ENCODE measurements at regions of chr13 and their contacts with region 1.

Region 1: GRCh38 chr13:113296842-113297369 is at the start of gene LAMP1:
- DNase-seq: peak; percentile 97 to 100 (median 99)
- ATAC-seq: peak; percentile 83
- H3K4me3 ChIP-seq: peak within 1 kb of the TSS; percentile 77
- H3K4me3 Mint-ChIP-seq: peak within 1 kb of the TSS; percentile 100
- H3K27ac ChIP-seq: peak within 1 kb of the TSS; percentile 83 to 88
- H3K27ac Mint-ChIP-seq: peak within 1 kb of the TSS; percentile 99
- H3K4me1 ChIP-seq: peaks cover 37% of the 10 kb centered on the region
- H3K4me1 Mint-ChIP-seq: peaks cover 36% of the 10 kb centered on the region
- H3K27me3 ChIP-seq: peaks cover 3 to 8% of the 10 kb centered on the region in 2 experiments
- H3K27me3 Mint-ChIP-seq: peaks cover 20% of the 10 kb centered on the region
- CTCF ChIP-seq: no peak
- total RNA-seq, gene LAMP1: 72.2 to 80.7 TPM

Region 2: DNA sequence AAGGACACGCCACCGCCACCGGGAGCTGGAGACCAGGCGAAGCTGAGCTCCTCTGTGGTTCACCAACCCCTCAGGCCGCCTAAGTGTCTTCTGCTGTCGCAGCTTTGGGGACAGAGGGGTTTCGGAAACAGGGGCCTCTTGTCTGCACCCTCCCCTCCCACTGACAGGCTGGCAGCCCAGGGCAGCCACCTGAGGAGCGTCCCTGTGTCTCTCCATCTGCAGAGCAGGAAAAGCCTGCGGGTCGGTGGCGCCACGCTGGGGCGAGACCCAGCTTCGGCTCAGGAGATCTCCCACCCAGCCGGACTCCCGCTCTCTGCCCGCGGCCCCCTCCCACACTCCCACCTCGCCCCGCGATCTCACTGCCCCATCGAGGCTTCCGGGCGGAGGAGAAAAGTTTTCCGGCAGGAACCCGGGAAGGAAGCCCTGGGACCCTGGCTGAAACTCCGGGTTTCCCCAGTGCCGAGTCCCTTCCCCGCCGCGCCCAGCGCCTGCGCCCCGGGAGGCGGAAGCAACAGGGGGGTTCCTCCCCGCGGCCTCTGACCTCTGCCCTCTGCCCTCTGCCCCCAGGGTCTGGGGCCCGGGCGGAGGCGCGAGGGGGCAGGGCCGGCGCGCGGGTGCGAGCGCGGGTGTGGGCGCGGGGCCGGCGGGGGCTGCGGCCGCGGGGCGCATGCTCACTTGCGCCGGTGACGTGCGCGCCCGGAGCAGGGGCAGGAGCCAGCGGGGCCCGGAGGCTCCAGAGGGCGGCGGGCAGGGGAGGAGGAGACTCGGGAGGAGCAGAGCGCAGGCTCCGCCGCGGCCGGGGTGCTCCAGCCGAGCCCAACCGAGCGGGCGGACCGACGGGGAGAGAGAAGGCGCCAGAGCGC is 607.4 kb before region 1 on chr13 and contains the start of gene ATP11A:
- CTCF ChIA-PET with region 1: no interaction called
- POLR2A ChIA-PET with region 1: no interaction called
- intact Hi-C with region 1: loop called in 1 of 2 experiments (anchors 5 kb)
- DNase-seq: peak; percentile 57 to 93 (median 76)
- ATAC-seq: peak; percentile 80
- H3K4me3 ChIP-seq: peak within 1 kb of the TSS; percentile 88
- H3K4me3 Mint-ChIP-seq: peak within 1 kb of the TSS; percentile 92
- H3K27ac ChIP-seq: peak within 1 kb of the TSS; percentile 79 to 88
- H3K27ac Mint-ChIP-seq: peak within 1 kb of the TSS; percentile 75
- H3K4me1 ChIP-seq: peaks cover 53% of the 10 kb centered on the region
- H3K4me1 Mint-ChIP-seq: peaks cover 53% of the 10 kb centered on the region
- H3K27me3 ChIP-seq: no peaks in the 10 kb centered on the region
- H3K27me3 Mint-ChIP-seq: no peaks in the 10 kb centered on the region
- CTCF ChIP-seq: no peak
- total RNA-seq, gene ATP11A: 56.7 to 66.8 TPM

Region 3: GRCh38 chr13:113153810-113154748 is 142.8 kb before region 1 on chr13:
- CTCF ChIA-PET with region 1: no interaction called
- POLR2A ChIA-PET with region 1: no interaction called
- intact Hi-C with region 1: loop called in 1 of 2 experiments (anchors 5 kb)
- DNase-seq: peak; percentile 59 to 88 (median 72)
- ATAC-seq: peak; percentile 83
- H3K4me3 ChIP-seq: peak overlapping the region; percentile 74
- H3K4me3 Mint-ChIP-seq: peak overlapping the region; percentile 90
- H3K27ac ChIP-seq: peak overlapping the region in 1 of 2 donors; percentile 73
- H3K27ac Mint-ChIP-seq: peak overlapping the region; percentile 84
- H3K4me1 ChIP-seq: peaks cover 33% of the 10 kb centered on the region
- H3K4me1 Mint-ChIP-seq: peaks cover 21% of the 10 kb centered on the region
- H3K27me3 ChIP-seq: no peaks in the 10 kb centered on the region
- H3K27me3 Mint-ChIP-seq: no peaks in the 10 kb centered on the region
- CTCF ChIP-seq: no peak

Region 4: DNA sequence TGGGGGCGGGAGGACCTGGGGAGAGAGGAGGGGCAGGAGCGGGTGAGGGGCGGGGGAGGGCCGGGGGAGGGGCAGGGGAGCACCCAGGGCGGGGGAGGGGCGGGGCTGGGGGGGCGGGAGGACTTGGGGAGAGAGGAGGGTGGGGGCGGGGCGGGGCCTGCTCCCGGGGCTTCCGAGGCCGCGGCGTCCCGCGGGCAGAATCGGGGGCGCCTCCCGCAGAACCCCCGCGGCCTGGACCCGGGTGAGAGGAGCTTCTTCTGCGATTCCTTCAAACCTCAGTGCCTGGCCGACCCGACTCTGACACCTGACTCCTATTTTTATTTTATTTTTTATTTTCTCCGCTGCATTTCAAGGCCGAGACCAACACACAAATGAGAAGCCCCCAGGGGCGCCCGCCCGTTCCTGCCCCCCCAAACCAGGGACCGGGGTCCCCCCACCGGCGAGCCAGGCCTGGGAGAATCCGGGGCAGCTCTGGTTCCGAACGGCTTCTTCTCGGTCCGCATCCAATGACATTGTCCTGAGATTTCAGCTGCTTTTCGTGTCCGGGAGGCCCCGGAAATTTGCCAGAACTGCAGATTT is 67.5 kb after region 1 on chr13:
- CTCF ChIA-PET with region 1: no interaction called
- POLR2A ChIA-PET with region 1: no interaction called
- intact Hi-C with region 1: loop called in 1 of 2 experiments (anchors 5 kb)
- DNase-seq: no peak
- ATAC-seq: no peak
- H3K4me3 ChIP-seq: peak overlapping the region; percentile 19
- H3K4me3 Mint-ChIP-seq: no peak overlapping the region
- H3K27ac ChIP-seq: no peak overlapping the region
- H3K27ac Mint-ChIP-seq: no peak overlapping the region
- H3K4me1 ChIP-seq: peaks cover 14% of the 10 kb centered on the region
- H3K4me1 Mint-ChIP-seq: peaks cover 8% of the 10 kb centered on the region
- H3K27me3 ChIP-seq: peaks cover 27 to 28% of the 10 kb centered on the region in 2 experiments
- H3K27me3 Mint-ChIP-seq: peaks cover 19% of the 10 kb centered on the region
- CTCF ChIP-seq: no peak

Region 5: DNA sequence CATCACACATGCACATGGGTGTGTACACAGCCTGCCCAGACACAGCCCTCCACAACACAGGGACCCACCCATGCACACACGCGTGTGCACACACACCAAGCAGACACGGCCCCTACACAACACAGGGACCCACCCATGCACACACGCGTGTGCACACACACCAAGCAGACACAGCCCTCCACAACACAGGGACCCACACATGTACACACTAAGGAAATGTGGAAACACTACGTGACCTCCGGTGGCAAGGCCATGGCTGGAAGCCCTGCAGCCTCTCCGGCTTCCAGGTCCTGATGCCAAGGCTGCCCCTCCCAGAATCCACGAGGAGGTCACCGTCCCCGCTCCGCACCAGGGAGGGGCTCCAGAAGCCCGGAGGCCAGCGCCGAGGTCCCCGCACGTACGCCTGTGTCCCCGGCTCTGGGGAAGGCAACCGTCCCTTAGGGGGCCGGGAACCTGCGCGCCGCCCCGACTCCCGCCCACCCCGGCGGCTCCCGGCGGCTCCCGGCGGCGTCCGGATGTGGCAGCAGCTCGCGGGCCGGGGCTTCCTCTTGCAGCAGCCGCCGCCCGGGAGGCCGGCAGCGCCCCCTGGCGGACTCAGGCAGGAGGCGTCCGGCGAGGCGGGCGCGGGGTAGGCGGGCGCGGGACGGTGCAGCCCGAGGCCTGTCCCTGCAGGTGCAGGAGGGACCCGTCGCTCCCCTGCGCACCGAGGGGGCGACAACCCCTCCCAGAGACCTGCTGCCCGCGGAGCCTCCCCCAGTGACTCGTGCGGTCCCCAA is 96.8 kb after region 1 on chr13:
- CTCF ChIA-PET with region 1: interaction called, 5 read pairs
- POLR2A ChIA-PET with region 1: interaction called, 4 read pairs
- intact Hi-C with region 1: loop called in 1 of 2 experiments (anchors 2 kb)
- DNase-seq: peak; percentile 63 to 92 (median 80)
- ATAC-seq: peak; percentile 96
- H3K4me3 ChIP-seq: peak overlapping the region; percentile 73
- H3K4me3 Mint-ChIP-seq: peak overlapping the region; percentile 89
- H3K27ac ChIP-seq: no peak overlapping the region
- H3K27ac Mint-ChIP-seq: no peak overlapping the region
- H3K4me1 ChIP-seq: peaks cover 11% of the 10 kb centered on the region
- H3K4me1 Mint-ChIP-seq: peaks cover 6% of the 10 kb centered on the region
- H3K27me3 ChIP-seq: no peaks in the 10 kb centered on the region
- H3K27me3 Mint-ChIP-seq: no peaks in the 10 kb centered on the region
- CTCF ChIP-seq: peak; percentile 73

Region 6: GRCh38 chr13:113490496-113491417 is 193.9 kb after region 1 on chr13 and contains the start of gene DCUN1D2:
- CTCF ChIA-PET with region 1: no interaction called
- POLR2A ChIA-PET with region 1: interaction called, 4 read pairs
- intact Hi-C with region 1: loop called in 1 of 2 experiments (anchors 5 kb)
- DNase-seq: peak; percentile 39 to 87 (median 66)
- ATAC-seq: peak; percentile 71
- H3K4me3 ChIP-seq: peak within 1 kb of the TSS; percentile 79
- H3K4me3 Mint-ChIP-seq: peak within 1 kb of the TSS; percentile 97
- H3K27ac ChIP-seq: peak within 1 kb of the TSS in 1 of 2 donors; percentile 39
- H3K27ac Mint-ChIP-seq: peak within 1 kb of the TSS; percentile 87
- H3K4me1 ChIP-seq: peaks cover 37% of the 10 kb centered on the region
- H3K4me1 Mint-ChIP-seq: peaks cover 70% of the 10 kb centered on the region
- H3K27me3 ChIP-seq: no peaks in the 10 kb centered on the region
- H3K27me3 Mint-ChIP-seq: no peaks in the 10 kb centered on the region
- CTCF ChIP-seq: no peak
- total RNA-seq, gene DCUN1D2: 16.2 to 18.9 TPM